PC-9 (cell line): ENCODE measurements at regions of chr14 and their contacts with region 1.

Region 1: DNA sequence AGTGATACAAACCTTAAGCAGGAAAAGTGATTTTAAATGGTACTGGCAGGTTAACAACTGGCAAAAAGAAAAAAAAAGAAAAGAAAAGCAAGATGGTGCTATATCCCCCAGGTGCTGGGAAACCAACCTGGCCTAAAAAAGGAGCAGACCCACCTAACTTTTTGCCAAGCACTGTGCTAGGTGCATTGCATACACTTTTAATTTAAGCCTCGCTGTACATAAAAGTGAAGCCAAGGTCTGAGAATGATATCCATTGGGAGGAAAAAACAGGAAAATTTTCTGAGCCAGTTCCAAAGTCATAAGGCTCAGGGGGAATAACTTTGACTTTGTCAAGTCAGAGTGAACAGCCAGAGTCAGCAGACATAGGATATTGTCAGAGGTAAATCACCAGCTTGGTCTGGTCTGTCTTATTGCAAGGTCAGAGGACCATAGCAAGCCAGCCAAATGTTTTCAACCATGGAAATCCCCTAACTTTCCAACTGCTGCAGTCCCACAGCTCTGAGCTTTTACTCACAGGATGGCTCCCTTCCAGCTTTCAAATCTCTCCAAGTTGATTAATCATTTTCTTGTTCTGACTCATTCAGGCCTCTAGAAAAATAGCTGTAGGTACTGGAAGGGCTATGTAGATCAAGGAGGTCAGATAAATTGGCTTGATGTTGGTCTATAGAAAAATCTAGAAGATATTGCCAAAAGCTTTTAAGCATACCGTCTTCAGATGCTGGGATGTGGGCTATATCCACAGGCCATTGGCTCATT is 412.9 kb downstream of the RAD51B start:
- DNase-seq: peak; percentile 72 to 96
- H3K4me3 ChIP-seq: no peak overlapping the region
- H3K27ac ChIP-seq: peak overlapping the region; percentile 91
- H3K4me1 ChIP-seq: peaks cover 44% of the 10 kb centered on the region
- H3K27me3 ChIP-seq: no peaks in the 10 kb centered on the region
- CTCF ChIP-seq: no peak

Region 2: DNA sequence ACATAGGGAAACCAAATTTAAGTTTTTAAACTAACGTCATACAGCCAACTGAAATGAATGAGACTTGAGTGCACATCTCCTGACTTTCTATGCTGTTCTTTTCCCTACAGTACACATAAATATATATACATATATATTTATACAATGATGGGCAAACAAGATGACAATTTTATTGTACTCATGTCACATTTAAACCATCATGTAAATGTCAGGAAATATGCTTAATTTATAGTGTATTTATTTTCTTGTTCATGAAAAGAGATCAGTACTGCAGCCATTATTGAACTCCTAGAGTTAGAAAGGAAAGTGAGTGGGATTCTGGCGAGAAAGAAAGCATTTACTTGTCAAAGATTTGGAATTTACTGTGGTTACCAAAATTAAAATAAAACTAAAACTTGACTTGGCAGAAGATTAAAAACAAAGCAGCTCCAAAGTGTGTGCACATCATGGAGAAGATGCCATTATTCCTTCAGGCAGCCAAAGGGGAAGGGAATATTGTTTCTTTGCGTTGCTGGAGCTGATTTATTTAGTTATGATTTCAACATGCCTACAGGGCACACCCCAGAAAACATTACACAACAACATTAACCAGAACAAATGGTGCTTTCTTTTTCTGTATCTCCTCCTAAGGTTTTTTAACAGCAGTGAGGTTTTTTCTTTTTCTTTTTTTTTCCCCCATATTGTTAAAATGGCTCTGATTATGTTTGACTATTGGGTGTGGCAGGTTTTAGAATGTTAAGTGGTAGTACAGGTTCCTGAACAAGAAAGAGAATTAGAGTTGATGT is 268.3 kb before region 1 on chr14:
- CTCF ChIA-PET with region 1: no interaction called
- POLR2A ChIA-PET with region 1: no interaction called
- intact Hi-C with region 1: loop called (anchors 5 kb)
- DNase-seq: peak; percentile 44 to 95
- H3K4me3 ChIP-seq: peak overlapping the region; percentile 34; the same call in 1 of the 2 replicates
- H3K27ac ChIP-seq: peak overlapping the region; percentile 77
- H3K4me1 ChIP-seq: peaks cover 38% of the 10 kb centered on the region
- H3K27me3 ChIP-seq: no peaks in the 10 kb centered on the region
- CTCF ChIP-seq: no peak

Region 3: DNA sequence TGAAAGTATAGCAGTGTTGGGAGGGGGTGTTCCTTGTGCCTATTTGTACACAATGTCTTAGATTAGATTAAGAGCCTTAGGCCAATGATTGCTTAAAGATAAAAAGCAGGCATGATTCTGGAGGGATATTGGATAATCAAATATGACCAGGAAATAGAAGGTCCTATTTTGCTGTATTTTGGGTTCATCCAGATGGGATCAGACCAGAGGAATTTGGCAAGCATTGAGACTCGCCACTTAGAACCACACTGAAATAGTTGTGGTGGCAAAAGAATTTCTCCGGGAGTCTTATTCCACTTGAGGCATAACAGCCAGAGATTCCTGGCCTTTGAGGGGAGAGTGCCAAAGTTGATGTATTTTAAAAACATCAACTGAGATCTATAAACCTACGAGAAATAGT is 85.7 kb before region 1 on chr14:
- CTCF ChIA-PET with region 1: no interaction called
- POLR2A ChIA-PET with region 1: no interaction called
- intact Hi-C with region 1: loop called (anchors 2 kb)
- DNase-seq: peak; percentile 71 to 98
- H3K4me3 ChIP-seq: no peak overlapping the region
- H3K27ac ChIP-seq: peak overlapping the region; percentile 90
- H3K4me1 ChIP-seq: peaks cover 37% of the 10 kb centered on the region
- H3K27me3 ChIP-seq: no peaks in the 10 kb centered on the region
- CTCF ChIP-seq: no peak

Region 4: GRCh38 chr14:68191567-68192321 is 40.7 kb before region 1 on chr14:
- CTCF ChIA-PET with region 1: no interaction called
- POLR2A ChIA-PET with region 1: no interaction called
- intact Hi-C with region 1: no loop called
- DNase-seq: peak in 1 of 2 experiments; percentile 90
- H3K4me3 ChIP-seq: no peak overlapping the region
- H3K27ac ChIP-seq: peak overlapping the region; percentile 52
- H3K4me1 ChIP-seq: peaks cover 30% of the 10 kb centered on the region
- H3K27me3 ChIP-seq: no peaks in the 10 kb centered on the region
- CTCF ChIP-seq: no peak

Region 5: DNA sequence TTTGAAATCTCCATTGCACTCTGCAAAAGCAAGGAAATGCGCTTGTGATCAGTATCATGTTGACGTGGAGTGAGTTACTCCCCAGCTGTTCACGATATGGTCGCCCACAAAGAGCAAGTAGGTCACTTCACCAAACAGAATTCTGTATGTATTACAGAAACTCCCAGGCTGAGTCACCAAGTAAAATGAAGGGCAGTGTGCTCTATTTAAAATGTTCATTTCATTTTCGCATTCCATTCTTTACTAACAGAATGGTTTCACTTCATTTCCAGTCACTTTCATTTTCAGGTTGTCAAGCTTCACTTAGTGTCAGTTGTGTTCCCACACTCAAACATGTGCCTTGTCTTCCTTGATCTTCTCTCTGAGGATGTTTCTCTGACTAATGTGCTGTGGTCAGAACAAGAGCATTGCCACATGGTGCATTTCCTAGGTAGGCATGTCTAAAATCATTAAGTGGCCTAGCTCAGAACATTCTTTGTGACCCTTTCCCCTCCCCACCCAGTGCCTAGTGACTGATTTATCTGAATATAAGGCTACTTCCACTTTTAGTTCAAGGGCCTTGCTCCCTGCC is 21.7 kb before region 1 on chr14:
- CTCF ChIA-PET with region 1: no interaction called
- POLR2A ChIA-PET with region 1: no interaction called
- intact Hi-C with region 1: loop called (anchors 2 kb)
- DNase-seq: peak; percentile 31 to 87
- H3K4me3 ChIP-seq: no peak overlapping the region
- H3K27ac ChIP-seq: peak overlapping the region; percentile 51
- H3K4me1 ChIP-seq: peaks cover 17% of the 10 kb centered on the region
- H3K27me3 ChIP-seq: no peaks in the 10 kb centered on the region
- CTCF ChIP-seq: no peak

Region 6: DNA sequence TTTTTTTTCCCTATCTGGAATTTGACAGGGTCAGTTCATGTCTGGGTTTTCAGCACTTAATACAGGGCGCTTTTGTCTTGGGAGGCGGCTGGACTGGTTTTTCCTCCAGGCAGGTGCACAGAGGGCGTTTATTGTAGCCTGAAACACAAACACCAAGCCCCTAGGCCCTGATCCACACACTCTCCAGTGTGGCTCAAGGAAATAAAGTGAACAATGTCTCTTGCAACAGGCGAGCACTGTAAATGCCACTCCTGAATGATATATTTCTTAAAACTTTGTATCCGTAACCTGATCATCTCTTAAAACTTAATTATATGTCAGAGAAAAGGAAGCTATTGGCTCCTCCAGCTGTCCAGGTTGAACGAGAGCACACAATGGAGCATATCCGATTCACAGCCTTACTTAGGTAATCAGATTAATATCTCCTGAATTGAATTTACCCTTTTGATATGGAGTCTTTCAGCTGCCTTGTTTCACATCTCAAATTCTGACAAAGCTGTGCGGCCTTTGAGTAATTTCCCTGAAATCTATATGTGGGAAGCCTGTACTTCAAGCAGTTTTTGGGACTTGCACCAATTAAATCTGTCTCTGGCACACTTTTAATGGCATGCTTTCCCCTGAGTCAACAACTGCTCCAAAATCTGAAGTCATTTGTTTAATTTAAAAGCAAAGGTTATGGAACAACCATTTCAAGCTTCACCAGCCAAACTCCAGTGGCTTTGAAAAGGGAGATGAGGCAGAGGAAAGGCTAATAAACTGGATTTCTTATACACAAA is 74.7 kb after region 1 on chr14:
- CTCF ChIA-PET with region 1: no interaction called
- POLR2A ChIA-PET with region 1: no interaction called
- intact Hi-C with region 1: no loop called
- DNase-seq: peak; percentile 73 to 99
- H3K4me3 ChIP-seq: peak overlapping the region; percentile 22; the same call in 1 of the 2 replicates
- H3K27ac ChIP-seq: peak overlapping the region; percentile 95
- H3K4me1 ChIP-seq: peaks cover 62% of the 10 kb centered on the region
- H3K27me3 ChIP-seq: no peaks in the 10 kb centered on the region
- CTCF ChIP-seq: no peak